Right cardiac atrium (tissue), 5 donors: ENCODE measurements at regions of chr13 and their contacts with region 1.

Region 1: DNA sequence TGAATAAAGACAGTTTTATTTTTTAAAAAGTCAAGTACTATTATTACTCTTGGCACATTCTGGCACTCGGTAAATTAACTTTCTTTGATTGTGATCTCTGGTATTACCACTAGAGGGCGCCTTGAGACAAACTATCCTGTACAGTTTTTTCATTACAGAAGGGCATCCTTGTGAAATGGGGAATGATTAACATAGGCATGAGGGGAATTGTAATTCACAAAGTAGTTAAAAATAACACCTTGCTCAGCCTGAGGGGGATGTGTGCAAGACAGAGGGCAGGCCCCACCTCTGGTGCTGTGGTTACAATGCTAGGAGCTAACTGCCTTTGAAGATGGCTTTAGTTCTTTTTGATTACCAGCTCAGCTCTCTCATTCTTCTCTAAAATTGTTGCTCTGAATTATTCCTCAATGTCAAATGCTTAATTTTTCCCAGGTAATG is 24.2 kb upstream of the C1QTNF9B start:
- DNase-seq: no peak
- ATAC-seq: peak in 1 of 2 donors; percentile 49
- H3K4me3 ChIP-seq: no peak overlapping the region
- H3K27ac ChIP-seq: no peak overlapping the region
- H3K4me1 ChIP-seq: no peaks in the 10 kb centered on the region
- H3K27me3 ChIP-seq: no peaks in the 10 kb centered on the region

Region 2: DNA sequence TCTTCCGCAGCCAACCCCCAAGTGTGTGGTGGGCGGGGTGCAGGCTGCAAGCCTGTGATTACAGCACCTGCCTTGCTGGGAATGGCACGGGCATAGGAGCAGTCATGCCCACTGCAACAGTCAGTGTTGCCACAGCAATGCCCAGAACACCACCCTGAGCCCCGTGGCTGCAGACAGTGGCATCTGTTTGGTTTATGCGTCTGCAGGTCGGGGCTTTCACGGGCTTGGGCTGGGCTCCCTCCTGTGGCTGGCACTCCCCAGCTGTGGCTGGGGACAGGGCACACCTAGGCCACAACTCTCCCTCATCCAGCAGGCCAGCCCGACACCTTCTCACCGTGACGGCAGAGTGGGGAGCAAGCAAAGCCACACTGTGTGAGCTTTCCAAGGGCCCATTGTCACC is 91.2 kb after region 1 on chr13:
- intact Hi-C with region 1: loop called in 1 of 4 experiments (anchors 10 kb)
- DNase-seq: no peak
- ATAC-seq: no peak
- H3K4me3 ChIP-seq: no peak overlapping the region
- H3K27ac ChIP-seq: no peak overlapping the region
- H3K4me1 ChIP-seq: no peaks in the 10 kb centered on the region
- H3K27me3 ChIP-seq: no peaks in the 10 kb centered on the region

Region 3: GRCh38 chr13:25018729-25019115 is 1097.3 kb after region 1 on chr13:
- intact Hi-C with region 1: no loop called
- DNase-seq: no peak
- ATAC-seq: no peak
- H3K4me3 ChIP-seq: peak overlapping the region; percentile 13
- H3K27ac ChIP-seq: no peak overlapping the region
- H3K4me1 ChIP-seq: no peaks in the 10 kb centered on the region
- H3K27me3 ChIP-seq: peaks cover 3% of the 10 kb centered on the region